ENCODE measurements at regions of chr12 and their contacts with region 1.

Region 1: DNA sequence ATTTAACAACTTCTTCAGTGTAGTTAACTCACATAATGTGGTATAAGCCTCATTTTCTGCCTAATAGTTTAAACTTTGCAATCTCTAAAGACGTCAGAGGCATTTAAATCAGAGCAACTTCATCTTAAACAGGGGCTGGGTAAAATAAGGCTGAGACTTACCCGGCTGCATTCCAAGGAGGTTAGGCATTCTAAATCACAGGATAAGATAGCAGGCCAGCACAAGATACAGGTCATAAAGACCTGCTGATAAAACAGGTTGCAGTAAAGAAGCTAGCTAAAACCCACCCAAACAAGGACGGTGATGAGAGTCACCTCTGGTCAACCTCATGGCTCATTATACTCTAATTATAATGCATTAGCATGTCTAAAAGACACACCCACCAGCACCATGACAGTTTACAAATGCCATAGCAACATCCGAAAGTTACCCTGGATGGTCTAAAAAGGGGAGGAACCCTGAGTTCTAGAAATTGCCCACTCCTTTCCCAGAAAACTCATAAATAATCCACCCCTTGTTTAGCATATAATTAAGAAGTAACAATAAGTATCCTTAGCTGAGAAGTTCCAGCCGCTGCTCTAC is 115.7 kb upstream of the PKP2 start:
- DNase-seq: no peak
- H3K4me3 ChIP-seq: no peak overlapping the region
- H3K27ac ChIP-seq: no peak overlapping the region
- H3K4me1 ChIP-seq: no peaks in the 10 kb centered on the region
- H3K27me3 ChIP-seq: no peaks in the 10 kb centered on the region
- CTCF ChIP-seq: no peak
- EP300 ChIP-seq: no peak
- POLR2A ChIP-seq: no peak

Region 2: DNA sequence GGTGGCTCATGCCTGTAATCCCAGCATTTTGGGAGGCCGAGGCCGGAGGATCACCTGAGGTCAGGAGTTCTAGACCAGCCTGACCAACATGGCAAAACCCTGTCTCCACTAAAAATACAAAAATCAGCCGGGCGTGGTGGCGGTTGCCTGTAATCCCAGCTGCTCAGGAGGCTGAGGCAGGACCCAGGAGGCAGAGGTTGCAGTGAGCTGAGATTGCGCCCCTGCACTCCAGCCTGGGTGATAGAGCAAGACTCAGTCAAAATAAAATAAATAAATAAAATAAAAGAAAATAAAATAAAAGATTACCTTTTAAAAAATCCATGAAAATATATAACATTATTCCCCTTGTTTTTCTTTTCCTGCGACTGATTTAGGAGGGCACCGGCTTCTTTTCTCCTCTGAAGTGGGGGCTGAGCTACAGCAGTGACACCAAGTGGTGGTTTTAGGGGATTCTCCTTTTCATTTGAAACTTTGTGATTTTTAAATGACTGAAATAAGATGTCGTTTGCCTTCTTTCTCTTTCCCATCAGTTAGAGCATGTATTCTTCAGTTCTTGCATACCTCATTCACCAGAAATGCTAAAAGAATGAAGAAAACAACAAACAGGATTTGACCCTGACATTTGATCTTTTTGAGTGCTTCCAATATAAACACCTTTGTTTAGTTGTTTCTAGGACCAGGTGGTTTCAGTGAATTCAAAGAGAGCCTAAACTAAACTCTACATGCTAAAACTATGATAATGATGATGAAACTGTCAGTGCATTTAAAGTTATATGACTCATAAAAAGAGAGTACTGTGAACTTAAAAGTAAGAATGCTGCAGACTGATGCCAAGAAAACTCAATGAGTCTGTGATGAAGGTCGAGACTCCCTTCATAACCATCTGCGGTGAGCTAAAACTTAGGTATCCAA is 93.2 kb before region 1 on chr12:
- in situ Hi-C with region 1: loop called in 1 of 4 experiments (anchors 25 kb)
- intact Hi-C with region 1: no loop called
- DNase-seq: no peak
- H3K4me3 ChIP-seq: no peak overlapping the region
- H3K27ac ChIP-seq: no peak overlapping the region
- H3K4me1 ChIP-seq: peaks cover 0 to 17% (median 0%) of the 10 kb centered on the region in 4 donors
- H3K27me3 ChIP-seq: no peaks in the 10 kb centered on the region
- CTCF ChIP-seq: peak; percentile 38 to 63 (median 47)
- EP300 ChIP-seq: no peak
- POLR2A ChIP-seq: no peak

Measured in transverse colon (tissue), 4 donors.